PC-9 (cell line): ENCODE measurements at regions of chr11 and their contacts with region 1.

Region 1: DNA sequence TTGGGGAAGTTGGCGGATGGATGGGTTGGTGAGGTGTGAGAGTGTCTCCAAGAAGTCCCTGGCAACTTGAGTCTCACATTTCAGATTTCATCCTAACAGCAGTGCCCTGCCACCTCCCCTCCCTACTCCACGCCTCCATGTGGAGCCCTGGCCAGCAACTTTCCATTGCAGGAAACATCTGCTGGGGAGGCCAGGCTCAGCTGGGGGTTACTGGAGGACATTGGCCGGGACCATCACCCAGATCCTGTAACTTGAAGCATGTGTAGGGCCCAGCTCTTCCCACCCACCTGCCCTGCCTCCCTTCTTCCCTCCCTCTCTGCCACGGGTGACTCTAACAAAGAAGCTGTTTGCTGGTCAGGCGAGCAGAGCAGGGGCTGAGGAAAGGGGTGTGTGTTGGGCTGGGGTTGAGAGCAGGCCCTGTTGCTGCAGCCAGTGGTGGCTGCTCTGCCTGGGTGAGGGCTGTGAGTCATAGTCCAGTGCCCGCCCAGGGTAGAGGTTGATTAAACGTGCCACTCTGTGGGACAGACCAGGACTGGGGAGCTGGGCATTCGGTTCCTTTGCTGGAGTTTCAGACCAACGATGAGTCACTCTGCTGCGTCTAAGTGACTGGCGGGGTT is 64.0 kb downstream of the SCN3B start:
- DNase-seq: peak; percentile 80 to 88
- H3K4me3 ChIP-seq: no peak overlapping the region
- H3K27ac ChIP-seq: peak overlapping the region; percentile 32; the same call in 1 of the 2 replicates
- H3K4me1 ChIP-seq: peaks cover 10% of the 10 kb centered on the region
- H3K27me3 ChIP-seq: no peaks in the 10 kb centered on the region
- CTCF ChIP-seq: no peak

Region 2: DNA sequence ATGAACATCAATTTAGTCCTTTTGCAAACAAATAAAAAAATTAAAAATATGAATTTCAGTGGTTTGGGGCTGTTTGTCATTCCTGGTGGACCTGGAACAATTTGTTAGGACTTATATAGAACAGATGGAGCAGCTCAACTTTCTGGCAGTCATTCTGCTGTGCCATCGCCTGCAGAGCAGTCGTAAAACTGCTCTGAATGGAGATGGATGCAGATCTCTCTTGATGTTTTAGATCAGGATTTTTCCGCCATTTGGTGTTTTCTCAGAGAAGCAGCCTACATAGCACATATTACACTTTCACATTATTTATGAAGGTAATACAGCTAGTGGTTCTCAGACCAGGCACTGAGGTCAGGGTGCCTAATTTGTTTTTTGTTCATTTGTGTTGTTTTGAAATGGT is 496.7 kb before region 1 on chr11:
- CTCF ChIA-PET with region 1: no interaction called
- POLR2A ChIA-PET with region 1: no interaction called
- intact Hi-C with region 1: no loop called
- DNase-seq: no peak
- H3K4me3 ChIP-seq: no peak overlapping the region
- H3K27ac ChIP-seq: no peak overlapping the region
- H3K4me1 ChIP-seq: no peaks in the 10 kb centered on the region
- H3K27me3 ChIP-seq: no peaks in the 10 kb centered on the region
- CTCF ChIP-seq: no peak

Region 3: GRCh38 chr11:123654566-123655081 is 64.2 kb after region 1 on chr11 and contains the start of gene SCN3B:
- CTCF ChIA-PET with region 1: no interaction called
- POLR2A ChIA-PET with region 1: no interaction called
- intact Hi-C with region 1: loop called (anchors 2 kb)
- DNase-seq: peak in 1 of 2 experiments; percentile 57
- H3K4me3 ChIP-seq: peak within 1 kb of the TSS; percentile 57; the same call in 1 of the 2 replicates
- H3K27ac ChIP-seq: no peak within 1 kb of the TSS
- H3K4me1 ChIP-seq: no peaks in the 10 kb centered on the region
- H3K27me3 ChIP-seq: peaks cover 83% of the 10 kb centered on the region
- CTCF ChIP-seq: no peak
- total RNA-seq, gene SCN3B: not detected in 2 replicates